Natural killer cell (primary cell): ENCODE measurements at regions of chrX and their contacts with region 1.

Region 1: DNA sequence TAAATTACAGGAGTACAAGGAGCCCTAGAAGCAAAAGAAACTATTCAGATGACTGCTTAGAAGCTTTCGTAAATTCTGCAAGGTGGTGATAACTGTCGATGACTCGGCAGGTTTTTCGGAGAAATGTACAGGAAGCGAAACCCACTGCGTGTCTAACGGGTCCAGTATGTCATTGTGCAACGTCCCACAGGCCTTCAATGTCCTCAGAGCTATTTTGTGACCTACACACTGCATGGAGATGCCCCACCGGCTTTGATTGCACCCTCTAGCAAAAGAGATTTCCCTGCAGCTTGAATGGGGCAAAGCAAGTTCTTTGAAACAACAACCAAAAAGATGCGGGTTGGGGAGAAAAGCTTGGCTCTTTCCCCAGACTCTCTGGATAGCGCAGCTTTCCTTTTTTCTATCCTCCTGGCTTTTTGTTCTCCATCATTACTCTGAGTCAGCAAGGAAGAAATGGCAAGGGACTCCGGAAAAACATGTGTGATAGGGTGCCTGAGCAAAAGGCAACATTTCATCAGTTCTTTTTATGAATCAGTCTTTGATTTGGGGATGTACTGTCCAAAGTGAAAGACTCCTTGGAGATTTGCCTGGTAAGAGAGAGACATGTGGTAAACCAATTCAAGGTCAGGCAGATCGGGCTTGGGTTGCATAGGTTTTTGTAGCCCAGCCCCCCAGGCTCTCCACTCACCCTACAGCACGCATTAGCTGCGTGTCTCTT is 112.0 kb upstream of the TBL1X start:
- DNase-seq: peak; percentile 20 to 59
- ATAC-seq: peak; percentile 45 to 70 (median 46)
- H3K4me3 ChIP-seq: no peak overlapping the region
- H3K4me3 Mint-ChIP-seq: peak overlapping the region; percentile 86
- H3K27ac ChIP-seq: peak overlapping the region; percentile 72
- H3K27ac Mint-ChIP-seq: peak overlapping the region; percentile 95 to 97
- H3K4me1 ChIP-seq: peaks cover 56% of the 10 kb centered on the region
- H3K4me1 Mint-ChIP-seq: peaks cover 43 to 53% of the 10 kb centered on the region in 2 donors
- H3K27me3 ChIP-seq: no peaks in the 10 kb centered on the region
- H3K27me3 Mint-ChIP-seq: no peaks in the 10 kb centered on the region
- CTCF ChIP-seq: no peak

Region 2: DNA sequence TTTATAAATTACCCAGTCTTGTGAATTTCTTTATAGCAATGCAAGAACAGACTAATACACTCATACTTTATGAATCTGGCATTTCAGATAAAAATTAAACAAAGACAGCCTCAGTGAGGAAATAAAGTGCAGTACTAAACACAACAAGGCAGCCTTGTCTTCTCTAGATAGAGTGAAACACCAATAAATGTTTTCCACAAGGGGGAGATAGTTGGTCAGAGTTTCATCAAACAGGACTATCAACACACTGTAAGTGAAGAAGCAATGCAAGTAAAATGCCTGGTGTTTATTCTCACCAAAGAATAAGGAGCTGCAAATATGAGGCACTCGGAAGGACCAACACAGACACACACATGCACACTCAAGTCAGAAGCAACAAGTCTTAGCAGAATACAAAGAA is 381.7 kb before region 1 on chrX:
- intact Hi-C with region 1: loop called (anchors 5 kb)
- DNase-seq: peak in 1 of 2 donors; percentile 68
- ATAC-seq: peak in 2 of 3 donors; percentile 70
- H3K4me3 ChIP-seq: no peak overlapping the region
- H3K4me3 Mint-ChIP-seq: no peak overlapping the region
- H3K27ac ChIP-seq: no peak overlapping the region
- H3K27ac Mint-ChIP-seq: no peak overlapping the region
- H3K4me1 ChIP-seq: no peaks in the 10 kb centered on the region
- H3K4me1 Mint-ChIP-seq: peaks cover 0 to 4% of the 10 kb centered on the region in 2 donors
- H3K27me3 ChIP-seq: no peaks in the 10 kb centered on the region
- H3K27me3 Mint-ChIP-seq: peaks cover 0 to 3% of the 10 kb centered on the region in 2 donors
- CTCF ChIP-seq: peak; percentile 47

Region 3: DNA sequence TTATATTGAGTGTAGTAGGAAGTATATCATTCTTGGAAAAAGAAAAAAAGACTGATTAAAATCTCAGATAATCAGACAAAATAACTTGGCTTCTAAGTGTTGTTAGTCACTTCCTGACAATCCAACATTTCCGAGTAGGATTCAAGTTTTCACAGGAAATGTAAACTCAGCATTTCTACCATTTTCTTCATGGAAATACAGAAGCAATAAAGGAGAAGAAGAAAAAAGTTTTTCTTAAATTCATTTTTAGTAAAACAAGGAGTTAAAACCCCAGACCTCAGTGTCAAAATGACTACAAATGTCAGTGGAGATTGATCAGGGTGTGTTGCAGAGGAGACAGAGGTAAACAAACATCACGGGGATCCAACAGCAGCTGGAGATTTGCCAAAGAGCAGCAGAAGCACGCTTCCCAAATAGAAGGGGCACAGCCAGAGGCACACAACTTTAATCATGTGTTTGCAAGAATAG is 189.6 kb before region 1 on chrX:
- intact Hi-C with region 1: loop called (anchors 10 kb)
- DNase-seq: peak in 1 of 2 donors; percentile 1
- ATAC-seq: no peak
- H3K4me3 ChIP-seq: no peak overlapping the region
- H3K4me3 Mint-ChIP-seq: no peak overlapping the region
- H3K27ac ChIP-seq: no peak overlapping the region
- H3K27ac Mint-ChIP-seq: no peak overlapping the region
- H3K4me1 ChIP-seq: peaks cover 4% of the 10 kb centered on the region
- H3K4me1 Mint-ChIP-seq: peaks cover 21 to 24% of the 10 kb centered on the region in 2 donors
- H3K27me3 ChIP-seq: no peaks in the 10 kb centered on the region
- H3K27me3 Mint-ChIP-seq: peaks cover 5% of the 10 kb centered on the region in 2 donors
- CTCF ChIP-seq: no peak

Region 4: GRCh38 chrX:9207142-9207541 is 145.7 kb before region 1 on chrX:
- intact Hi-C with region 1: loop called (anchors 10 kb)
- DNase-seq: no peak
- ATAC-seq: no peak
- H3K4me3 ChIP-seq: no peak overlapping the region
- H3K4me3 Mint-ChIP-seq: peak overlapping the region; percentile 82
- H3K27ac ChIP-seq: no peak overlapping the region
- H3K27ac Mint-ChIP-seq: peak overlapping the region in 1 of 2 donors; percentile 89
- H3K4me1 ChIP-seq: peaks cover 22% of the 10 kb centered on the region
- H3K4me1 Mint-ChIP-seq: peaks cover 29 to 41% of the 10 kb centered on the region in 2 donors
- H3K27me3 ChIP-seq: no peaks in the 10 kb centered on the region
- H3K27me3 Mint-ChIP-seq: no peaks in the 10 kb centered on the region
- CTCF ChIP-seq: no peak

Region 5: DNA sequence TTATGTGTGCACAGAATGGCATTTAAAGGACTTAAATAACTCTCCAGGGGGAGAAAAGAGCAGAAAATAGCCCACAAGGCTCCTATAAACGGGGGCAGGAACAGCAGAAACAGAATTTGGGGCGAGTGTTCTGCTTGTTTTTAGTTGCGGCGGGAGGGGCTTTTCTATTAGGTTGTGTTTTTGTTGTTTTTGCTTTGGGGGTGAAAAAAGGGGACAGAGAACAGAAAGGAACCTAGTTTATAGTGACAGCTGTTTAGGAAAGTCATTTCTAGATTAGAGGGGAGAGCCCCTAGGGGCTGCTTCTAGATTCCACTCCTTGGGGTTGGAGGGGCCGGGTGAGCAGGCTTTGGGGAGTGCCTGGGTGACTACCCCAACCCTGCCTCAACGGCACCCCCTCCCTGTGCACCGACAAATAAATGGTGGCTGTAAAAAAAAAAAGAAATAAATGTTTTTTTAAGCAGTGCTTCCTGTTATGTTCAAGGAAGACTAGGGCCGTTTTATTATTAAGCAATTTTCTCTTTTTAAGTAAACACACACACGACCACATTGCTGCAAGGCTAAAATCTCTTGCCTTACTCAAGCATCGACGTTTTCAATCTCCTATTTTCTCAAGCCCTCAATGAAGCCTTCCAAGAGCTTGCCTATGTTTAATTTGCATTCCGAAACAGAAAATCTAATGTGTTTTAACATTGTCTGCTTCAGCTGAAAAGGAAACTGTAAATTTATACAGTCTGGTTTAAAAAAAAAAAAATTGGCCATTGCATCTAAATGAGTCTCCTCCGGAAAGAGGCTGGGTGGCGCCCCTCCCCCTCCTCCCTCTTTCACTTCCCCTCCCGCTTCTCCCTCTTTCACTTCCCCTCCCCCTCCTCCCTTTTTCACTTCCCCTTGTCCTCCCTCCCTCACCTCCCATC is 11.3 kb before region 1 on chrX:
- intact Hi-C with region 1: loop called (anchors 1 kb)
- DNase-seq: peak; percentile 35 to 80
- ATAC-seq: peak; percentile 43 to 72 (median 56)
- H3K4me3 ChIP-seq: peak overlapping the region; percentile 28
- H3K4me3 Mint-ChIP-seq: peak overlapping the region; percentile 92
- H3K27ac ChIP-seq: peak overlapping the region; percentile 89
- H3K27ac Mint-ChIP-seq: peak overlapping the region; percentile 98
- H3K4me1 ChIP-seq: peaks cover 33% of the 10 kb centered on the region
- H3K4me1 Mint-ChIP-seq: peaks cover 34 to 39% of the 10 kb centered on the region in 2 donors
- H3K27me3 ChIP-seq: no peaks in the 10 kb centered on the region
- H3K27me3 Mint-ChIP-seq: no peaks in the 10 kb centered on the region
- CTCF ChIP-seq: no peak

Region 6: DNA sequence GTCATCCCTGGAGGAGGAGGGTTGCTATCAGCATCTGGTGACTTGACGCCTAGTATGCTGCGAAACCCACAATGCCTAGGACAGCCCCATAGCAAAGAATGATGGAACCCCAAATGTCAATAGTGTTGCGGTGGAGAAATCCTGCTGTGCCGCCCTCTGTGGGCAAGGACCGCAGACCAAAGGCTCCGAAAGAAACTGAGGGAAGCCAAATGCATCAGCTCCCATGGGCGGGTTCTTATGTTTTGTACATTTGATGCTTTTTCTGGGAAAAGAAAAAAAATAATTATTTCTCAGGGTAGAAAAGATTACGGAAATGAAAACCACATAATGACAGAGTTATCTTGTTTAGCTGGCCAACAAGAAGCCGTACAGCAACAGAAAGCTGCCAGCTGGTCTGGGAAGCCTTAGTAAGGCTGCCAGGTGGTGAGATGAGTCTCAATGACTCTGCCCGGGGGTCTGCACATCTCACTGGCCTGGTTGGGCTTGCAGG is 17.0 kb after region 1 on chrX:
- intact Hi-C with region 1: loop called (anchors 2 kb)
- DNase-seq: peak; percentile 37 to 39
- ATAC-seq: peak; percentile 63 to 93 (median 86)
- H3K4me3 ChIP-seq: no peak overlapping the region
- H3K4me3 Mint-ChIP-seq: peak overlapping the region; percentile 76
- H3K27ac ChIP-seq: no peak overlapping the region
- H3K27ac Mint-ChIP-seq: peak overlapping the region; percentile 77 to 85
- H3K4me1 ChIP-seq: peaks cover 23% of the 10 kb centered on the region
- H3K4me1 Mint-ChIP-seq: peaks cover 20 to 28% of the 10 kb centered on the region in 2 donors
- H3K27me3 ChIP-seq: no peaks in the 10 kb centered on the region
- H3K27me3 Mint-ChIP-seq: peaks cover 0 to 6% of the 10 kb centered on the region in 2 donors
- CTCF ChIP-seq: no peak

Region 7: GRCh38 chrX:9708904-9709553 is 356.2 kb after region 1 on chrX:
- intact Hi-C with region 1: loop called (anchors 2 kb)
- DNase-seq: peak; percentile 71 to 87
- ATAC-seq: peak; percentile 85 to 92 (median 86)
- H3K4me3 ChIP-seq: no peak overlapping the region
- H3K4me3 Mint-ChIP-seq: no peak overlapping the region
- H3K27ac ChIP-seq: no peak overlapping the region
- H3K27ac Mint-ChIP-seq: peak overlapping the region in 1 of 2 donors; percentile 19
- H3K4me1 ChIP-seq: peaks cover 6% of the 10 kb centered on the region
- H3K4me1 Mint-ChIP-seq: peaks cover 7 to 15% of the 10 kb centered on the region in 2 donors
- H3K27me3 ChIP-seq: no peaks in the 10 kb centered on the region
- H3K27me3 Mint-ChIP-seq: no peaks in the 10 kb centered on the region
- CTCF ChIP-seq: peak; percentile 73